ENCODE measurements at regions of chr5 and their contacts with region 1.

Region 1: DNA sequence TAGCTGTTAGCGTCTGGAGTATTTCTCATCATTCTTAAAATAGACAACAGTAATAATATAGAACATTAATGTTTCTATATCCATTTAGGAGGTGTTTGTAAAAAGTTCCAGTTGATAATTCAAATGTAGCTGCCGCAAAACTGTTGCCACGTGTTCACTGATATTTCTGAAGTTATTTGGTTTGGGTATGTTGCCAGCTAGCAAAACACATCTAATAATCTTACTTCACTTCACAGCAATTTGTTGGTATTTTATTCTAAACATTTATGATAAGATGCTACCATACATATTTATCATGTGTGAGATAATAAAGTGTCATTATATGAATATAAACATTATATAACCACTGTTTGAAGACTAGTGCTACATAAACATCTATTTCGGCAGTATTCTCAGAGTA is 101.6 kb downstream of the CDH12 start:
- DNase-seq: no peak
- ATAC-seq: no peak
- H3K4me3 ChIP-seq: no peak overlapping the region
- H3K4me3 Mint-ChIP-seq: no peak overlapping the region
- H3K27ac ChIP-seq: no peak overlapping the region
- H3K27ac Mint-ChIP-seq: no peak overlapping the region
- H3K4me1 ChIP-seq: no peaks in the 10 kb centered on the region
- H3K4me1 Mint-ChIP-seq: no peaks in the 10 kb centered on the region
- H3K27me3 ChIP-seq: no peaks in the 10 kb centered on the region
- H3K27me3 Mint-ChIP-seq: no peaks in the 10 kb centered on the region

Region 2: DNA sequence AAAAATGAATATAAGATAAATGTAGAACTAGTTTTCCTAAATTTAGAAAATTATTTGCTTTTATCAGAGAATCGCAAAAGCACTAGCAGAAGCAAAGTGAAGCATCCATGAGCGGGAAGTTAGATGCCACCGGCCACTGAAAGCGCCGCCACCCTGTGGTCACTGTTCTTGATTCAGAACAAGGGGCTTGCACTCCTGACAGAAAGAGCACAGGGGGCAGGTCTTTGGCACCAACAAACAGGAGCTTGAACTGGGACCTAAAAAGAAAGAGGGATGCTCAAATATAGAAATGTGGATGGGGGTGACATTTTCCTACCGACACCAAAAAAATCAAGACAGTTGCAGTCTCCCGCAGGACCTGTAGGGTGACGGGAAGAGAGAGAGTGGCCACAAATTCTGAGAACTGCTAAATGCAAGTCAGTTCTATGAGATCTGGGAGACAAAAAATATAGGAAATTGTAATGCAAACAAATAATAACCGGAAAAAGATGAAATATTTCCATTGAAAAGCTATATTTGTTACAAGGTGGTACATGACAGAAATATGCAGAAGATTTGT is 42.7 kb before region 1 on chr5:
- CTCF ChIA-PET with region 1: interaction called in 1 of 2 experiments, 15 read pairs
- POLR2A ChIA-PET with region 1: no interaction called
- DNase-seq: no peak
- ATAC-seq: no peak
- H3K4me3 ChIP-seq: no peak overlapping the region
- H3K4me3 Mint-ChIP-seq: no peak overlapping the region
- H3K27ac ChIP-seq: no peak overlapping the region
- H3K27ac Mint-ChIP-seq: no peak overlapping the region
- H3K4me1 ChIP-seq: no peaks in the 10 kb centered on the region
- H3K4me1 Mint-ChIP-seq: no peaks in the 10 kb centered on the region
- H3K27me3 ChIP-seq: no peaks in the 10 kb centered on the region
- H3K27me3 Mint-ChIP-seq: no peaks in the 10 kb centered on the region